Body of pancreas (tissue), 4 donors: ENCODE measurements at regions of chr2 and their contacts with region 1.

Region 1: DNA sequence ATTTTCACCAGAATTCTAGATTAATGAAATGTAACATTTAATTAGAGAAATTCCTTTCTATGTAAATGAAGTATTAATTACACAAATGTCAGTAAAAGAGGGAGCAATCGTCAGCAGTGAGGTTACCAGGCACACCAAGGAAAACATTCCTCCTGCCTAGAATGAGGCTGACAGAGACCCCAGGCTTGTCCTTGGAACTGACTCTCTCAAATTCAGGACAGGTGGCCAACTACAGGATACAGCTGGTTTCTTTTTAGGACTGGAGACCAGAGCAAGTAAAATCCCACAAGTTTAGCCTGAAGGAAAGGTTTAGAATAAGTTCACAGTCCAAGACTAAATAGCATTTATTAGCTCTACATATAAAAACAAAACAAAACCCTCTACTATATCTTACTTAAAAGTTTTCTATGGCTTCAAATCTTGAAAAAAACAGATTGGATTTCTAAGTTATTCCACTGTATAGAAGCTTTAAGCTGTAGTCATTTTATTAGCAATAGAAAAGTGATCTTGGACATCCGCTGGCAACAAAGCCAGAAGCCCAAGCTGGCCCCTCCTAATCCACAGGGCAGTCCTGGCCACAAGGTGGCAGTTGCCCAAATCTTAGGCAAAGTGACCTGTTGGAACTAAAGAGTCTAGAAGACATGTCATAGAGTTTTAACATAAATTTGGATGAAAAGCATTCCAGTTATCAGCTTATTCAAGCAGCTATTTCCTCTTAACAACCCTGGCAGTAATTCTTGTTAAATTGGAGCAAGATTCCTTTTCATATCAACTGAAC is 81.0 kb downstream of the SP3 start:
- DNase-seq: peak; percentile 70 to 82 (median 72)
- ATAC-seq: peak; percentile 60
- H3K4me3 ChIP-seq: no peak overlapping the region
- H3K27ac ChIP-seq: no peak overlapping the region
- H3K4me1 ChIP-seq: no peaks in the 10 kb centered on the region
- H3K27me3 ChIP-seq: no peaks in the 10 kb centered on the region
- CTCF ChIP-seq: peak; percentile 39 to 80 (median 70)
- POLR2A ChIP-seq: no peak

Region 2: DNA sequence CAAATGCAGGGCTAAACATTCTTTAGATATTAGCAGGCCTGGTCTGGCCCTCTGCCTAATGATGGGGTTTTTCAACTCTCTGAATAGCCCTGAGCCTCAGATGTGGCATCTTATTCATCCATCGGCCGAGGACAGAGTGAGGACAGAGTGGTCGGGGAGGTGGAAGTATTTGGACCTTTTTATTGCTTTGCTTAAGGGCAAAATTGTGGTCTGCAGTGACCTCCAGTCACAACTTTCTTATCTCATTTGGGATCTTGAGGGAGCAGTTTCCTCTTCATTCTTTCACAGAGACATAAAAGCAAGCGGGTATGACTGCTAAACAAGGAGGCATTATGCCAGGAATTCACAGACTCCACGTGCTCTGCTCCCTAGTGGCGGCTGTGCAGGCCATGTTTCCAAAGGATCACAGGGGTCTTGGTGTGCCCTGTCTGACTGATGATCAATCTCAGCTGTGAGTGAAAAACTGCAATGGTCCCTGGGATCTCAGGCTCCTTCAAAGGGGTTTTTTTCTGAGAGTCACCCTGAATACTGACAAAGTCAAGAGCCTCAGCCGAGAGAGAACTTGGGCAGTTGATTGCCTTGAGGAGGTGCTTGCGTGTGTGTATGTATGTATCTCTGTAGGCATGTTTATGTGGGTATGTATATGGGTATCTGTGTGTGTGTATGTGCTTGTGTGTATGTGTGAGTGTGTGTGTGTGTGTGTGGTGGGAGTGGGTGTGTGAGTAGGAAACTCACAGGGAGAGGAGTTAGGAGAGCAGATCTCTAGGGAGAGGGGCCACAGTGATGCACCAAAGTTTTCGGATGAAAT is 1100.9 kb before region 1 on chr2:
- intact Hi-C with region 1: no loop called
- DNase-seq: peak in 3 of 4 donors; percentile 25 to 59 (median 29)
- ATAC-seq: peak; percentile 62
- H3K4me3 ChIP-seq: no peak overlapping the region
- H3K27ac ChIP-seq: peak overlapping the region in 1 of 4 donors; percentile 61
- H3K4me1 ChIP-seq: no peaks in the 10 kb centered on the region
- H3K27me3 ChIP-seq: no peaks in the 10 kb centered on the region
- CTCF ChIP-seq: no peak
- POLR2A ChIP-seq: no peak

Region 3: DNA sequence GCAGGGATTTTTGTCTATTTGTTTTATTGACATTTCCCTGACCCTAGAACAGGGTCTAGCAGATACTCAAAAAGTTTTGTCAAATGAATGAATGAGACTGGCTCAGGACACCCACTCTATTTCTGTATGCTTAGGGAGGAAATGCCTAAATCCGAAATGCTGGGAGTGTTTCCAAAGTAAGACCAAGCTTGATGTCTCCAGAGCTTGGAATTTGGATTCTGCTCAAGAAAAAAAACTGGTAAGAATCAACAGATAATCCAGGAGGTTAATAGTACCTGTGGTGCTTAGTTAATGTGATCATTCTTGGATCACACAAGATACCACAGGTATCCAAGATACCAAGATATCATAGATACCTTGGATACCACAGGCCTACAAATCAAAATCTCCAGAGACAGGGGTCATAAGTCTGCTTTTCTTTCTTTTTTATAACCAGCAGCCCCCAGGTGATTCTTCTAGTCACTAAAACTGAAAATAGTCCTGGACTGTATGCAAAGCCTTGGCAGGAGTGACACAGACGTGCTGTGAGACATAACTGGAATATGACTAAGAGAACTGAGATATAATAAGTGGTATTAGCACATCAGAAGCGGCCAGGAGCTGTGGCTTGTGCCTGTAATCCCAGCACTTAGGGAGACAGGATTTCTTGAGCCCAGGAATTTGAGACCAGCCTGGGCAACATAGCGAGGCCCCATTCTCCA is 120.8 kb after region 1 on chr2:
- intact Hi-C with region 1: loop called (anchors 10 kb)
- DNase-seq: peak in 1 of 4 donors; percentile 24
- ATAC-seq: no peak
- H3K4me3 ChIP-seq: no peak overlapping the region
- H3K27ac ChIP-seq: peak overlapping the region; percentile 49 to 75 (median 60)
- H3K4me1 ChIP-seq: peaks cover 22% of the 10 kb centered on the region
- H3K27me3 ChIP-seq: no peaks in the 10 kb centered on the region
- CTCF ChIP-seq: no peak
- POLR2A ChIP-seq: no peak